GM12878 (cell line): ENCODE measurements at regions of chr12 and their contacts with region 1.

Region 1: DNA sequence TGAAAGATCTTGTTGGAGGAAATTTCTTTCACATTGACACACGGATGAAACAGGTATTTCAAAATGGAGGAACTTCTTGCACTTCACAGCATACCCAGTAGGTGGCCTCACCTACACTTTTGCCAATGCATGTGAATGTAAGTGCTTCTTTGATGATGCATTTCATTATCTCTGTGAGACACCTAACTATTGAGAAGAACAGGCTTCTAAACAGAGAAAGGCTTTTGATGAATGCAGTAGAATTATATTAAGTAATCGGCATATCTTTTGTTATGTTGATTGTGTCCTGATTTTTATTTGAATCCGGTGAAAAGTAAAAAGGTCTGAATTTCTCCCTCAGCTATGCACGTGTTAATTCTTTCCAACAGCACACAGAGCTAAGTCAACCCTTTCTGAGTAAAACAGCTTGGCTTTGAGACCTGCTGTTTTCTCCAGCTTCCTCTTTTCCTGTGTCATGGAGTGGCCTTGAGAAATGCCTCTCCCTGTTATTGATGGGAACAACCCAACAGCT is 399.0 kb downstream of the NAV3 start:
- DNase-seq: peak; percentile 21
- ATAC-seq: peak; percentile 91
- H3K4me3 ChIP-seq: no peak overlapping the region
- H3K27ac ChIP-seq: no peak overlapping the region
- H3K4me1 ChIP-seq: no peaks in the 10 kb centered on the region
- H3K27me3 ChIP-seq: no peaks in the 10 kb centered on the region
- CTCF ChIP-seq: peak; percentile 66 to 80 (median 76)
- EP300 ChIP-seq: no peak
- POLR2A ChIP-seq: no peak
- RAD21 ChIP-seq: peak; percentile 74

Region 2: GRCh38 chr12:78128211-78128610 is 101.4 kb before region 1 on chr12:
- CTCF ChIA-PET with region 1: no interaction called
- POLR2A ChIA-PET with region 1: no interaction called
- RAD21 ChIA-PET with region 1: no interaction called
- SMC1A ChIA-PET with region 1: no interaction called
- in situ Hi-C with region 1: no loop called
- intact Hi-C with region 1: loop called (anchors 5 kb)
- DNase-seq: no peak
- ATAC-seq: no peak
- H3K4me3 ChIP-seq: no peak overlapping the region
- H3K27ac ChIP-seq: no peak overlapping the region
- H3K4me1 ChIP-seq: no peaks in the 10 kb centered on the region
- H3K27me3 ChIP-seq: no peaks in the 10 kb centered on the region
- CTCF ChIP-seq: no peak
- EP300 ChIP-seq: no peak
- POLR2A ChIP-seq: no peak
- RAD21 ChIP-seq: no peak

Region 3: DNA sequence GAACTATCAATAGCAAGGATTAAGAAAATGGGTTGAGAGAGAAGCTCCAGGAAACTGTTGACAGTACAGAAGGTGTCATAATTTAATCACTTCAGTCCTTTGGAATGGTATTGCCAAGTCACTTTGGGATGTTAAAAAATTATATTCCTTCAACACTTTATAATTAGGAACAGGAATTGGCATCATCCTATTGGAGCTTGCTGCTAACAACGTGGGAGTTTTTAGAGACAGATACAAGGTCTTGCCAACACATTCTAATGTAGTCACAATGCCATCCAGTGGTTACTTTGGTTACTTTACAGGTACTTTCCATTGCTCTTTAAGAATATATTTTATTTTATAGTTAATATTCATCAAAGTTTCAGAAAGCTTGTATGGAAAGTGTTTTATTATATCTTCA is 945.0 kb after region 1 on chr12:
- CTCF ChIA-PET with region 1: interaction called, 6 read pairs
- POLR2A ChIA-PET with region 1: no interaction called
- RAD21 ChIA-PET with region 1: interaction called, 4 read pairs
- SMC1A ChIA-PET with region 1: interaction called, 6 read pairs
- in situ Hi-C with region 1: no loop called
- intact Hi-C with region 1: loop called (anchors 5 kb)
- DNase-seq: no peak
- ATAC-seq: peak; percentile 86
- H3K4me3 ChIP-seq: no peak overlapping the region
- H3K27ac ChIP-seq: no peak overlapping the region
- H3K4me1 ChIP-seq: no peaks in the 10 kb centered on the region
- H3K27me3 ChIP-seq: no peaks in the 10 kb centered on the region
- CTCF ChIP-seq: peak in 2 of 3 experiments; percentile 14 to 51; a peak in 1 of 6 replicates
- EP300 ChIP-seq: no peak
- POLR2A ChIP-seq: no peak
- RAD21 ChIP-seq: peak; percentile 56